ENCODE measurements at regions of chr11 and their contacts with region 1.

Region 1: DNA sequence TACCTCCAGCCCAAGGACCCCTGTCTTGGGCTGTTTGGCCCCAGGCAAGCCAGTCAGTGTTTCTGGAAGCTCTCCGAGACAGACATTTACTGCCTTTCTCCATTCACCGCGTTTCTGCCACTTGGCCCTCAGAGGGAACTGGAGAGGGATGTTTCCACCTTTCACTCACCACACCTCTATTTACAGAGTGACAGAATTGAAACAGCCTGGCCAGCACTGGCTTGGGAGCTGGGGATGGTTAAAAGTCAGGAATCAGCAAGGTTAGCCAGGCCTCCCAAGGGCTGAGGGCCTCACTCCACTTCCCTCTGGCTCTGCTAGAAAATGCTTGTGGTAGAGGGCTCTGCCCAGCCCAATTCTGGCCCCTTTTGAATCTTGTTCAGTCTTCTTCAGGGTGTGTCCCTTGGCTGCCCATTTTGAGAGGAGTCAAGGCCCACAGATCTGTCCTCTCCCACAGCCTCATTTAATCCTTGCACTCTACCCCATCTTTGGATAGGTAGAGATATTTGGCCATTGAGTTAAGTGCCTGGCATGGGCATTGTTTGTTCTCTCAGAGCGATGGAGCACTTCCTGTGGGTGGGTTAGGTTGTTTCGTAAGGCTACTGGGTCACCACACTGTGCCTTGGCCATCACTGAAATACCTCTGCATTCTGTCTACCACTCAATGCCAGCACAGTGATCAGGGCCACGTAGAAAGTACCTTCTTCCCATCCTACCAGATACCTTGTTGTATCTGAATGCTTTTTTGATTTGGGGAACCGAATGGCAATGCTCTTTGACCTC is 119.2 kb downstream of the MICAL2 start:
- DNase-seq: no peak

Region 2: GRCh38 chr11:12100841-12101242 is 128.8 kb before region 1 on chr11:
- intact Hi-C with region 1: loop called in 1 of 2 experiments (anchors 5 kb)
- DNase-seq: no peak